BJ (cell line): ENCODE measurements at regions of chr2 and their contacts with region 1.

Region 1: DNA sequence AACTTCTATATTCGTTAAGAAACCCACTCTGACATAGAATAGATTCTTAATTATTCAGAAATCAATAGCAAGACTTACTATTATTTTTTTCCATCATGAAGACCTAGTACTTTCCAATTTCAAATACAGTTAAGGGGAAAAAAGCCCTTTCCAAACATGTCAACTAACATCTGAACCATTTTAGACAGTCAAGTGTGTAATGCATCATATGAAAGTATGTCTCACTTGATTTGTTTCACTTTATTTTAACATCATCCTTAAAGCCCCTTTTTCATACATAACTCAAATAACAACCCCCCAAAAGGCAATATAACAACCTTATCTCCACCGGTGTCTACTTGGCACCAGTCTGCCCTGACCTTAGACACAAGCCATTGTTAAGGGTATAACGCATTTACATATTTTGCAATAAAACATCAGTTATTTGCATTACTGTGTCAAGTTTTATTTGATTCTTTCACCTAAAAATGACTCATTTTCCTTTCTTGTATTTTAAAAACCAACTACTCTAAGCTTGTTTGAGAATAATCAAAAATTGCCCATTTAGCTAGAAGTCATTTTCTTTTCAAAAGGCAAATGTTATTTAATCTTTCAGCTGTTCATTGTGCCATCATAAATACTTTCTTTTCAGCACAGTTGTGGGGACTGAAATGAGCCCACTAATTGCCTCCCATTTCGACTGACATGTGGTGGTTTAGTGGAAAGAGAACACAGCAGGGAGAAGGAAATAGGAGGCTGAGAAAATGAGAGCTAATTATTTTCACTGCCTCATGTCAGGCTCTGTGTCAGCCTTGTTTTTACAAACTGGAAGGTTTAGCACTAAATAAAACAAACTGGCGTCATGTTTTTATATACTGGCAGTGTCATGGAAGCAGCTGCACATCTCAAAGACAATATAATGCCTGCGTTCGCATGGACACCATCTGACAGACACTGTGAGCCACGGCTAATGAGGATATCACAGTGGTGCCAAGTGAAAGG is 104.7 kb upstream of the CDCA7 start:
- DNase-seq: no peak
- H3K4me3 ChIP-seq: no peak overlapping the region
- H3K27me3 ChIP-seq: no peaks in the 10 kb centered on the region
- CTCF ChIP-seq: no peak

Region 2: GRCh38 chr2:173218326-173219056 is 31.5 kb before region 1 on chr2:
- CTCF ChIA-PET with region 1: no interaction called
- POLR2A ChIA-PET with region 1: no interaction called
- DNase-seq: no peak
- H3K4me3 ChIP-seq: no peak overlapping the region
- H3K27me3 ChIP-seq: no peaks in the 10 kb centered on the region
- CTCF ChIP-seq: no peak

Region 3: GRCh38 chr2:173264603-173265366 is 14.8 kb after region 1 on chr2:
- CTCF ChIA-PET with region 1: no interaction called
- POLR2A ChIA-PET with region 1: interaction called, 14 read pairs
- DNase-seq: no peak
- H3K4me3 ChIP-seq: no peak overlapping the region
- H3K27me3 ChIP-seq: no peaks in the 10 kb centered on the region
- CTCF ChIP-seq: no peak

Region 4: DNA sequence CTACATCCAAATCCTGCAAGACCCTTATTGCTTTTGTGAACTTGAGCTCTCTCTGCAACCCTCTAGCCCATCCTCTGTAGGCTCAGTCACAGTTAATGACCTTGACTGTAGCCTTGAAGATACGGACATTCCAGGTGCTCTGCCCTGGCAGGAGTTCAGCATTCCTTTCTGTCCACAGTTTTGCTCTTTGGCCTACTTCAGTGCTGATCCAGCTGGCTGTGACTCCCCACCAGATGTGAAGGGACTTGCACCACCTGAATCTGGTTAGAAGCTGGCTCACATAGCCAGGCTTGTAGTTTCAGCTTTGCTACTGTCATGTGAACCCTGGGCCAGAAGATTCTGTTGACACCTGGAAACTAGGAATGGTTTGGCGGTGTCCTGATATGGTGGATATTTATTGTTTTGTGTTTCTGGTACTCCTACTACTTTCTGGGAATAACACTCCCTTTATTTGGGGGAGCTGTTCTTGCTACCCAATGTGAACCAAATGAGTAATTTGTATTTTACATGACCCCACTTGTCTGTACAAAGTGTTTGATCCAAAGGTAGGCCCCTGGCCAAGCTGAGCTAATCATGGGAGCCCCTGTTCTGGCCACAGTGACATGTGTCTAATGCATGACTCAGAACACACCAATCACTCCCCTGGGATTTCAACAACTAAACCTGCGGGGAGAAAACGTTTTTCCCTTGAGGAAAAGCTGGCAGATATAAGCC is 178.1 kb after region 1 on chr2:
- CTCF ChIA-PET with region 1: no interaction called
- POLR2A ChIA-PET with region 1: no interaction called
- DNase-seq: no peak
- H3K4me3 ChIP-seq: no peak overlapping the region
- H3K27me3 ChIP-seq: peaks cover 1% of the 10 kb centered on the region; the same call in 1 of the 2 replicates
- CTCF ChIP-seq: no peak